Activated CD4-positive, alpha-beta T cell treated with anti-CD3 and anti-CD28 coated beads for 36 hours (primary cell): ENCODE measurements at regions of chr11 and their contacts with region 1.

Region 1: DNA sequence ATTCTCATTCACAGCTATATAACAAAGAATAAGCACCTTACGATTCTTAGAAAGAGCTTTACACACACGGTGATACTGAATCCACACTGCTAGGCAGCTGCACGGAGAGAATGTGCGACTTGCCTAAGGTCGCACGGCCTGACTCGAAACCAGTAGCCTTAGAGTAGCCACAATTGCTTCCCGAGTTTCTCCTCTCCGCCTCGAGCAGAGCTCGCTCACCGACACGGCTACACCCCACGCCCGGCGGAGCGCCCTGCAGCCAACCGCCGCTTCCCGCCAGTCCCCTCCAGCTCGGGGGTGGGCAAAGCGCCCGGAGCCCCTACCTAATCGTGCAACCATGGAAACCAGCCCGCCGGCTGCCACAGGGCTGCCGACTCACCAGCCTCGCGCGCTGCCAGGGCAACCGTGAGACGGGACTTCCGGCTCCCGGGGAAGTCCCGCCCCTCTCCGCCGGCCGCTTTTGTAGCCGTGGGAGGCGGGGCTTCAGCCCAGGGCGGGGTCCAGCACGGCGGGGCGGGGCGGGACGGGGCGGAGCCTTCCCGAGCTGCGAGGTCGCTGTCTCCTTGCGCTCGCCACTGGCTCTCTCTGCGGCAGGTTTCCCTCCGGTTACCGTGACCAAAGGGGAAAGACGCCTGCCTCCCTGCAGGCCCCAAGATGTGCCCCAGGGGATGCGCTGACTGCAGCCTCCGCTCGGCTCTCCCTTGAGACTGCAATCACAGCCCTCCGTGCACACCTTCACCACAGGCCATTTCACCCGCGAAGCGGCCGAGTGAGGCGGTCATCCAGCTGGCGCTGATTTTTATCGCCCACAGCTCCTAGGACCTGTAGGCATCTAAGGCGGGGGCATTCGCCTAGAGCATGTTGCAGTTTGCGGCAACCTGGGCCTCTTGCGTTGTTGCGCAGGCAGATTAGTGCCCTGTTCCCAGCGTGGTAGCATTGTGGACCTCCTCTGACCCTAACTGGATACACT is 1.1 kb downstream of the BSCL2 start:
- DNase-seq: peak; percentile 98
- ATAC-seq: peak; percentile 72
- H3K4me3 Mint-ChIP-seq: peak overlapping the region; percentile 82
- H3K27ac Mint-ChIP-seq: peak overlapping the region; percentile 51
- H3K4me1 Mint-ChIP-seq: peaks cover 46% of the 10 kb centered on the region
- H3K27me3 Mint-ChIP-seq: no peaks in the 10 kb centered on the region

Region 2: DNA sequence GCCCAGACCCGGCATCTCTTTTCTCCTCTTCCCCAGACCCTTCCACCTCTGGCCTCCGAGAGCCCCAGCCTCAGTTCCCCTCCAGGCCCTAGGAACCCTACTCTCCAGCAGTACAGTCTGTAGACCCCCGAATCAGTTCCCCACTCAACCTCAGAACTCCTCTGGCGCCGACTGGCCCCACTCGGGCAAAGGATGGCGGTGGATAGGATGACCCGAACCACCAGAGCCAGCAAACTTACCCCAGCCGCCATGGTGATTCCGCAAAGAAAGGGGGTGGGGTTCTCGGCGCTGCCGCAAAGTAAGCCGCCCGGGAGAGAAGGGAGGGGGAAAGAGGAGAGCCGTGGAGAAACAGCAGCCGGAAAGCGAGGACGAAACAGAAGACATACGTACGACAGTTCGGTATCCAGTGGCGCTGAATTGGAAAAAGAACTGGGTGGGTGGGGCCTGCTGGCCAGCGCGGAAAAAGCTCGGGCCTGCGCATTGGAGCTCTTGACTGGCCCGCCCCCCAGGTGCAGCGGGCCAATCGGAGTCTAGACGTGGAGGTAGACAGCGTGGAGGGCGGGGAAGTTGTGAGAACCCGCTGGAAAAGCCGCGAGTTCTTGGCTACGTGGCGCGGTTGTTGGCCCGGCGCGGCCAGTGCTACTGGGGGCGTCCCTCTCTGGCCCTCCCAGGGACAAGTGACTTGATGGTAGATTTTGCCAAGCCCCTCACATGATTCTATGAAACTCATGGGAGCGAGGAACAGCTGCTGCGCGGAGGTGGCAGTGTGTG is 132.4 kb before region 1 on chr11 and contains the start of gene EEF1G:
- CTCF ChIA-PET with region 1: interaction called, 3 read pairs
- POLR2A ChIA-PET with region 1: interaction called, 3 read pairs
- intact Hi-C with region 1: loop called in 1 of 2 experiments (anchors 1 kb)
- DNase-seq: peak; percentile 99
- ATAC-seq: peak; percentile 97
- H3K4me3 Mint-ChIP-seq: peak within 1 kb of the TSS; percentile 93
- H3K27ac Mint-ChIP-seq: peak within 1 kb of the TSS; percentile 97
- H3K4me1 Mint-ChIP-seq: peaks cover 43% of the 10 kb centered on the region
- H3K27me3 Mint-ChIP-seq: no peaks in the 10 kb centered on the region
- total RNA-seq, gene EEF1G: 1,986 to 2,351 TPM

Region 3: DNA sequence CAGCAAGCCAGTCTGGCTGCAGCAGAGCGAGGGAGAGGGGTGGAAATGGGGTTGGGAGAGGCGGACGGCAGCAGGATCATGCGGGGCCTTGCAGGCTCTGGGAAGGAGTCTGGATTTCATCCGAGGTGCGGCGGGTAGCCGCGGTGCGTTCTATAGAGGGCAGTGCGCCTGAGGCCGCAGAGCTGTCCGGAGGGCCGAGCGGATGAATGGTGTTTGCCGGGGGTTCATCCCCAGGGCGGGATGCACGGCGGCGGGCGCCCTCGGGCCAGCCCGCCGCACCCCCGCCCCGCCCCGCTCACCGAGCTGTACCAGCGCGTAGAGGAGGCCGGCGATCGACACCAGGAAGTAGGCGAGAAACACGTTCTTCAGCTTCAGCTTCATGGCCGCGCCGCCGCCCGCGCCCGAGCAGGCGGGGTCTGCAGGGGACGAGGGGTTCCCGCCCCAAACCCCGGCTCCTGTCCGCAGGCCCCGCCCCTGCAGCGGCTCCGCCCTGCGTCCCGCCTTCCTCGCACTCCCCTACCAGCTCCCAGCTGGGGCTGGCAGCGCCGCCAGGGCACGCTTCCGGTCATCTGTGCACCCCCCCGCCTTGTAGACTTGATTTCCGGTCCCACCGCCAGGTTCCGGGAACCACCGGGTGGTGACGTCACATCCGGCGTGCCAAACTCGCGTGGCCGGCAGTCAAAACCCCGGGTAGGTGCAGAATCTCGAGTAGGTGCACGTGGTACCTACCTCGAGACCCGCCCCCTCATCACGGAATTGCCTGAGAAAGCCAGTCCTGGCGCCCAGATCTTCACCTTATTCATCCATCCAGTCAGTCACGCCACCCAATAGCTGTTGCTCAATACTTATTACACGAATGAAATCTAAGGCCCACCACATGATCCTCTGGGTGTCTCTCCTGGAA is 84.3 kb before region 1 on chr11 and contains the start of gene B3GAT3:
- CTCF ChIA-PET with region 1: no interaction called
- POLR2A ChIA-PET with region 1: interaction called, 4 read pairs
- intact Hi-C with region 1: loop called in 1 of 2 experiments (anchors 1 kb)
- DNase-seq: peak; percentile 97
- ATAC-seq: peak; percentile 94
- H3K4me3 Mint-ChIP-seq: peak within 1 kb of the TSS; percentile 92
- H3K27ac Mint-ChIP-seq: peak within 1 kb of the TSS; percentile 94
- H3K4me1 Mint-ChIP-seq: peaks cover 29% of the 10 kb centered on the region
- H3K27me3 Mint-ChIP-seq: no peaks in the 10 kb centered on the region
- total RNA-seq, gene B3GAT3: 48.7 to 57.5 TPM

Region 4: DNA sequence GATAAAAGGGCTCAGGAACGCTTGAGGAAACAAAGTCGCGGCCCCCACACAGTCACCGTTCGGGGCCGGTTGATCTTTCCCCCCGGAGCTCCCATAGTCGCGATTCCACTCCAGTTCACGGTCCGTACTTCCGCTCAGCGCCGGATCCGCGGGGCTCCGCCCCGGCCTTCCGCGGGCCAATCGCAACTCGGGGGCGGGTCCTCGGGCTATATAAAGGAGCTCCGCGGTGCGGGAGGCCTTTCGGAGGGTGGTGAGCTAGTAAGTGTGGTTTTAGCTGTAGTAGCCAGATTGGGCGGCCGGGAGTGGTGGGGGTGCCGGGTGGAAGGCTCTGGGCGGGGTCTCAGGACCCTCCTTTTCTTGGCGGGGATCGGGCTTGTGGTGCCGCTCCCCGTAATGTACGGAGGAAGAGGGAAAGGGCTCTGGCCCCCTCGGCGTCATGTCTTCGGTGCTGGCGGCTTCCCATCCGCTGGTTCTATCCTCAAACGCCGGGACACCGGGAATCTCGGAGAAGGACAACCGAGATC is 41.0 kb before region 1 on chr11 and contains the starts of genes C11orf98 and CSKMT:
- CTCF ChIA-PET with region 1: interaction called, 3 read pairs
- POLR2A ChIA-PET with region 1: interaction called, 16 read pairs
- intact Hi-C with region 1: loop called (anchors 1 to 5 kb)
- DNase-seq: peak; percentile 97
- ATAC-seq: peak; percentile 90
- H3K4me3 Mint-ChIP-seq: peak within 1 kb of the TSS; percentile 93
- H3K27ac Mint-ChIP-seq: peak within 1 kb of the TSS; percentile 89
- H3K4me1 Mint-ChIP-seq: peaks cover 38% of the 10 kb centered on the region
- H3K27me3 Mint-ChIP-seq: no peaks in the 10 kb centered on the region
- total RNA-seq, gene C11orf98: 108 to 135 TPM
- total RNA-seq, gene CSKMT: 12.6 to 31.3 TPM

Region 5: DNA sequence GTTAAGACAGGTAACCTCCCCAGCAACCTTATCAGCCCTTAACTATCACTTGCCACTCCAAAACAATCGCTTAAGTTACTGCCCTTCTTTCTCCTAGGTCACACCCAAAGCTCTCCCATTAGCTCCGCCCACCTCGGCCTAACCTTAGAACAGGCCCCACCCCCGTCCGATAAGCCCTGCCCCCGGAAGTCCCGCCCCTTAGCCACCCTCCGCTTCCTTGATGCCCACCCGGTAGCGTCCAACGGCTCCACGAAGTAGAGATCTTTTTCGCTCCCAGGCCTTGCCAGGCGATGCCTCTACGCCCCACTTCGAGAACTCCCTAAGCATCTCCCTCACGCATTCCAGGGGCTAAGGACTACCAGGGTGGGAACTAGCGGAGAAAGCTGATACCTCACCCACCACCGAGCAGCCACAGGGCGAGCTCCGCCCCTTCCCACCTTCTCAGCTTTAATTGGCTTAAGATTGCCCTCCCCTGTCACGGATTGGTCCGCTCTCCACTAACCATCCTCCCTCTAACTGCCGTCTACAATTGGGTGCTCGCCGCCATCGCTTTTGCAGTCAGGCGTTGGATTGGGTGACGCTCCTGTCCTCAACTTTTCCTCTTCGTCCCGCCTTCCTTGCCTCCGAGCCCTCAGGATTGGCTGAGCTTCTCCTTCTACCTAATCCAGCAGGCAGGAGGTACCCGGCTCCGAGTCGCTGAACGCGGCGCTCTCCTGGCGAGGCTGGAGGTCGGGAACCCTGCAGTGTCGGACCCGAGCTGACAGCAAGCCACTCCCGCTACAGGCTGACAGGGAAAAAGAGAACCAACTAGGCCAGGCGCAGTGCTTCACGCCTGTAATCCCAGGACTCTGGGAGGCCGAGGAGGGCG is 47.8 kb after region 1 on chr11 and contains the start of gene ZBTB3:
- CTCF ChIA-PET with region 1: interaction called, 3 read pairs
- POLR2A ChIA-PET with region 1: interaction called, 5 read pairs
- intact Hi-C with region 1: loop called in 1 of 2 experiments (anchors 1 kb)
- DNase-seq: peak; percentile 98
- ATAC-seq: peak; percentile 98
- H3K4me3 Mint-ChIP-seq: peak within 1 kb of the TSS; percentile 96
- H3K27ac Mint-ChIP-seq: peak within 1 kb of the TSS; percentile 97
- H3K4me1 Mint-ChIP-seq: peaks cover 26% of the 10 kb centered on the region
- H3K27me3 Mint-ChIP-seq: no peaks in the 10 kb centered on the region
- total RNA-seq, gene ZBTB3: 6.0 to 10.2 TPM

Region 6: GRCh38 chr11:62831520-62832335 is 125.6 kb after region 1 on chr11 and contains the start of gene STX5:
- CTCF ChIA-PET with region 1: no interaction called
- POLR2A ChIA-PET with region 1: no interaction called
- intact Hi-C with region 1: loop called in 1 of 2 experiments (anchors 1 kb)
- DNase-seq: peak; percentile 100
- ATAC-seq: peak; percentile 95
- H3K4me3 Mint-ChIP-seq: peak within 1 kb of the TSS; percentile 84
- H3K27ac Mint-ChIP-seq: peak within 1 kb of the TSS; percentile 99
- H3K4me1 Mint-ChIP-seq: peaks cover 38% of the 10 kb centered on the region
- H3K27me3 Mint-ChIP-seq: no peaks in the 10 kb centered on the region
- total RNA-seq, gene STX5: 19.3 to 21.8 TPM